A673 (cell line): ENCODE measurements at regions of chr4 and their contacts with region 1.

Region 1: DNA sequence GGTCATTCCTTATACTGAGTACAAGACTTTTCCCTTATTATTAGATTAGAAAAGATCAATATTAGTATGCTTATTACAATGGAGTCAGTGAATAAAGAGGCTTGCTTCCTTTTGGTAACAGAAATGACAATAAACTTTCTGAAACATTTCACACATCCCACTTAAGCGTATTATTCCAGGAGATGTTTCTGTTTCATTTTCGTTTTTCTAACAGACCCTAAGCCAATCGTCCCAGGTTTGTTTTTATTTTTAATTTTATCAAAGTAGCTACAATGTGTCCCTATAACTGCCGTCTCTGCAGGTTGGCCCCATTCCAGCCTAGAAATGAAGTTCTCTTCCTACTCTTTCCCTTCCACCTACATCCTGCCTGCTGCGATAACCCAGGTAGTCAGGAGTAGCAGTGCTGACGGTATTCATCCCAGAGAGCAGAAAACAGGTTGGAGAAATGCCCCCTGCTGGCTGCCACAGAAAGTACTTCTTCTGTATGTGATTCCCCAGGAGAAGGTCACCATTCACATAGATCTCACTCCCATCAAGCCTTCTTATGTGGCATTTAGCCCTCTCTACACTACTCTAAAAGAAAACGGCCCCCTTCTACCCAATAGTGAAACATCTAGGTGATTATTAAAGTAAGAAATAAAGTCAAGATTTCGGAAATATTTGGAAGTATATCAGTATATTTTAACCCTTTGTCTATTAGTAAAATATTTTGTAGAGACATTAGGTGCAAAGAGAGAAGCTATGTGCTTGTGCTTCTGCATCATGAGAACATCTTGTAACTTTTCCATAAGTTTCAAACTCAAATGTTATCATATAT is 40.4 kb downstream of the ENPEP start:
- DNase-seq: peak; percentile 86
- H3K4me3 ChIP-seq: peak overlapping the region; percentile 55
- H3K27ac ChIP-seq: peak overlapping the region; percentile 8
- H3K4me1 ChIP-seq: peaks cover 16% of the 10 kb centered on the region
- H3K27me3 ChIP-seq: no peaks in the 10 kb centered on the region
- CTCF ChIP-seq: peak; percentile 85

Region 2: DNA sequence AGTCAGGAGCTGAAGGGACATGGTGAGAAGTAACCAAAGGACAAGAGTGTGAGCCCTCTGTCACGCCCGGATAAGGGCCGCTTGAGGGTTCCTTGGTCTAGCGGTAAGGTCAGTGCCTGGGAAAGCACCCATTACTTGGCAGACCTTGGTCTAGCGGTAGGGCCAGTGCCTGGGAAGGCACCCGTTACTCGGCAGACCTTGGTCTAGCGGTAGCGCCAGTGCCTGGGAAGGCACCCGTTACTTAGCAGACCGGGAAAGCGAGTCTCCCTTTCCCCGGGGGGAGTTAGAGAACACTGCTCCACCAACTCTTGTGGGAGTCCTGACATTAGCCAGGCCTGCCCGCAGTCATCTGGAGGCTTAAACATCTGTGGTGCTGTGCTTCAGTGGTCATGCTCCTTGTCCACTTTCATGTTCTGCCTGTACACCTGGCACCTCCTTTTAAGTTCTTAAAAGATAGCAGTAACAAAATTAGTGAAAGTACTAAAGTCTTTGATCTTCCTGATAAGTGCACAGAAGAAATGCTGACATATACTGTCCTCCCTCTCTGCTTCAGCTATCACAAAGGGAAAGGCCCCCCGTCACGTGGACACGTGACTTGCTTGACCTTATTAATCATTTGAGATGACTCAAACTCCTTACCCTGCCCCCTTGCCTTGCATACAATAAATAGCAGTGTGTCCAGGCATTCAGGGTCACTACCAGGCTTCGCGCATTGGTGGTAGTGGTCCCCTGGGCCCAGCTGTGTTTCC is 1092.0 kb before region 1 on chr4:
- CTCF ChIA-PET with region 1: no interaction called
- POLR2A ChIA-PET with region 1: no interaction called
- intact Hi-C with region 1: loop called (anchors 5 kb)
- DNase-seq: no peak
- H3K4me3 ChIP-seq: no peak overlapping the region
- H3K27ac ChIP-seq: no peak overlapping the region
- H3K4me1 ChIP-seq: peaks cover 8% of the 10 kb centered on the region
- H3K27me3 ChIP-seq: no peaks in the 10 kb centered on the region
- CTCF ChIP-seq: no peak

Region 3: DNA sequence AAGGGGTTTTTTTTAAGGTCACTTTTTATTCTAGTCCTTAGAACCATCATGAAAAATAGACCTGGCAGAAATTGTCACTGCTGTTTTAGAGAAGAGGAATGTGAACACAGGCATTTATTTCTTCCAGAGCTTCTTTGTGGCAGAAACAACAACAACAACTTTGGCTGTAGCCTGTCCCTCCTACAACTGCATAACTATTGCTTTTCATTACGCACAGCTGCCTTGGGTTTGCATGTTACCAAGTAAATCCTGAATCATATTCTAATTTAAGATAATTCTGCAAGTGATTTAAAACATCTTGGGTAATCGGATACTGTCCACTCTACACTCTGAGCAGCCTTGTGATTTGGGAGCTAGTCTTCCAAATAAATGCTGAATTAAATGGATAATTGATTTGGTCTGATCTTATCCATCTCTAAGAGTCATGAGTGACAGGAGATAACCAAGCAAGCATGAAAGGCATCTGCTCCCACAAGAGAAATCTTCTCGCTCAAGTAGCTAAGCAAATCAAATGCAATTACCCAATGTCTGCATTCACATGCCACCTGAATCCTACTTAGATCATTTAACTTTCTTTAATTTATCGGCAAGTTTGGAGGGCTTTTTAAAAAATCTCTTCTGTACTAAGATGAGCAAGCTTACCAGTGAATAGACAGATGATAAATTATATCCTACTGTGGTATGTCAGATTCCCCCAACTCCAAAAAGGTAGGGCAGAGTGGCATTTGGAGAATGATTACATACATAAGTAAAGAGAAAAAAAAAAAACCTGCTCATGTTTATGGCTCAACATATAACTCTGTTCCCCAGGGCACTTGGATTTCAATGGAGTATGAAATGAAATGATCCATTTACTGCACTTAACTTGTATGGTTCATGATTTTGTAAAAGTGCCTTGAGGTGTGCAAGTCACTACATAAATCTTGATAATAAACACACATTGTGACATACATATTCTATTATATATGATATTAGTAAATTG is 530.0 kb before region 1 on chr4:
- CTCF ChIA-PET with region 1: no interaction called
- POLR2A ChIA-PET with region 1: no interaction called
- intact Hi-C with region 1: no loop called
- DNase-seq: no peak
- H3K4me3 ChIP-seq: no peak overlapping the region
- H3K27ac ChIP-seq: no peak overlapping the region
- H3K4me1 ChIP-seq: peaks cover 22% of the 10 kb centered on the region
- H3K27me3 ChIP-seq: no peaks in the 10 kb centered on the region
- CTCF ChIP-seq: no peak

Region 4: GRCh38 chr4:109998867-109999584 is 517.3 kb before region 1 on chr4:
- CTCF ChIA-PET with region 1: interaction called, 5 read pairs
- POLR2A ChIA-PET with region 1: no interaction called
- intact Hi-C with region 1: loop called (anchors 1 kb)
- DNase-seq: peak; percentile 74
- H3K4me3 ChIP-seq: no peak overlapping the region
- H3K27ac ChIP-seq: no peak overlapping the region
- H3K4me1 ChIP-seq: no peaks in the 10 kb centered on the region
- H3K27me3 ChIP-seq: no peaks in the 10 kb centered on the region
- CTCF ChIP-seq: peak; percentile 68

Region 5: DNA sequence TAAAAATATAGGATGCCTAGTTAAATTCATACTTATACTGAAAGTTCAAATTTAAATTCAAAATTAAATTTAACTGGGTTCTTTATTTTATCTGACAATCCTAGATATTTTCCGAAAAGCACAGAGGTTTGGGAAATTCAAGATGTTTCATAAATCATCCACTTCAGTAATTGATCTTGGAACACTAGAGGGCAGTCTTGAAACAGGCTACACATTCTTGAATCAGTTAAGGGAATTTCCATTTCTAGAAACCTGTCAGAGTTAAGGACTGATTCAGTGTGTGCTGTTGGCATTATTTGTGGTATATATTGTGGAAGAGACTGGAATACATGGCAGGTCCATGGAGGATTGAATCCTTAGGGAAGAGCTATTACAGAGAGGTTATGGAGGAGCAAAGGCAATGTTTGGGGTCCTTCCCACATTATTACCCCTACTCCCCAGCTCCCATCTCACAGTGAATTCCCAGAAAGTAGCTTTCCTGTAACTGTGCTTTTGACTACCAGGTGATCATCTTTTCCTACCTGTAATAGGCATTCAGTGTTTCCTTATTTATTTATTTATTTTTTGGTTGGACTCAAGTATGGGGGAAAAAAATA is 510.8 kb before region 1 on chr4:
- CTCF ChIA-PET with region 1: no interaction called
- POLR2A ChIA-PET with region 1: no interaction called
- intact Hi-C with region 1: loop called (anchors 2 kb)
- DNase-seq: peak; percentile 84
- H3K4me3 ChIP-seq: no peak overlapping the region
- H3K27ac ChIP-seq: no peak overlapping the region
- H3K4me1 ChIP-seq: peaks cover 3% of the 10 kb centered on the region
- H3K27me3 ChIP-seq: no peaks in the 10 kb centered on the region
- CTCF ChIP-seq: peak; percentile 85

Region 6: DNA sequence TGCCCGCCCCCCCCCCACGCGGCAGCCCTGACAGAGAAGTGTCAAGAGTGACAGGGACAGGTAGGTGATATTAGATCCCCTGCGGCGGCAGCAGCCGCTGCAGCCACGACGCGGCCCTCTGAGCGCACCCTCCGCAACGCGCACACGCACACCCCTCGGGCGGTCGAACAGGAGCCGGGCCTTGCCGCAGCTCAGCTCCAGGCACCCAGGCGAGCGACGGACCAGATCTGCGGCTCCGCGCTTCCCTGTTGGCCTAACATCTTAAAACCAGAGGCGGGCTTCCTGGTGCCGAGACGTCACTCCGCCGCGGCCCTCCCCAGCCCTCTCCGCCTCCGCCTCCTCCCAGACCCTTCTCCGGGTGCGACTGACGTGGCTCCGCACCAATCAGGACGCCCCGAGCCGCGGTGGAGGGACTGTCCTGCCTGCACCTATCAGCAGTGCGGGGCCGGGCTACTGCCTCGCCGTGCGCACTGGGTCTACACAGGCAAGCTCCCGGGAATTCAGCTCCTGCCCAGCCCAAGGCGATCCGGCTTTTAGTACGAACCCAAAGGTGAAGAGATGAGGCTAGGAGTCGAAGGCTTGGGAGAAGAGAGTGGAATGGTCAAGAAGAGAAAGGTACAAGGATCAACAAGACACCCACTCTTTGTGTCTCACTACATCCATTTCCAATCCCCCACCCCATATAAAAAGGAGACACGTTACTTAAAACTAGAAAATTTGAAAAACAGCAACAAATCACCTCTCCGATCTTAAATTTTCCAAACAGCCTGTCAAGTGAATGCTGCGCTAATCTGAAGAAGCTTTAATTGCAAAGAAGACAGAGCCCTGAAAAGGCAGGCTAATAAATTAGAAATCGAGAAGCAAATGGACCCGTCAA is 106.8 kb after region 1 on chr4 and contains the start of gene PITX2:
- CTCF ChIA-PET with region 1: no interaction called
- POLR2A ChIA-PET with region 1: no interaction called
- intact Hi-C with region 1: no loop called
- DNase-seq: no peak
- H3K4me3 ChIP-seq: no peak within 1 kb of the TSS
- H3K27ac ChIP-seq: no peak within 1 kb of the TSS
- H3K4me1 ChIP-seq: peaks cover 13% of the 10 kb centered on the region
- H3K27me3 ChIP-seq: no peaks in the 10 kb centered on the region
- CTCF ChIP-seq: no peak
- total RNA-seq, gene PITX2: 0.90 and 2.0 TPM in 2 replicates

Region 7: DNA sequence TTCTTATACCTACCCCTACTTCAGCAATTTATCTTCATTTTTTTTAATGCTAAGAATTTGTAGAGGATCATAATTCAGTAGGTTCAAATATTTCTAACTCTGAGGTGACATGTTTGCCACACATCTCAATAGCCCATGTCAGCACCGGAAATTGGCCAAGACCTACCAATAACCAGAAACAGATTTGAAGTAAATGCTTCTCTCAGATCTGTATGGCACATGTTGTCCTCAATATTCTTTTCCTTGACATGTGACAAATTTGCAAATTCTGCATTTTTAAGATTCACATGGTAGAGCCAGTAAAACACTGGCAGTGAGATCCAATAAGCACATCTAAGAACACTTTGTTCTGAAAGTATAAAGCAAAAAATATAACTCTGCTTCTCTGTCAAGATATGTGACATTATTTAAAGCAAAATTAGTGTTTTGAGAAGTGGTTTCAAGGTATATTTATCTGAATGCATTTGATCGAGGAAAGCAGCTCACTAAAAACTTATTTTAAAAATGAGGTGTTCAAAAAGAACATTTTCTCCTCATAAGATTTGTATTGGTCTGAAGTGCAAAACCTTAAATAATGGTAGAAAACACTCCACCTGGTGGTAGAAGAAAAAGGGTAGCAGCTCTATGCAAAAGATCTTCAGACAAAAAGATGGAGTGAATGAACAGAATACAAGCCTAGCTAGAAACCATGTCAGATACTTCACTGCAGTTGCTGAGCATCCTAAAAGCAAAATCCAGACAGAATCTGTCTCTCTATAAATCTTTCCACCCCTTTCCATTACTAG is 1115.1 kb after region 1 on chr4:
- CTCF ChIA-PET with region 1: no interaction called
- POLR2A ChIA-PET with region 1: no interaction called
- intact Hi-C with region 1: loop called (anchors 5 kb)
- DNase-seq: peak; percentile 61
- H3K4me3 ChIP-seq: no peak overlapping the region
- H3K27ac ChIP-seq: no peak overlapping the region
- H3K4me1 ChIP-seq: peaks cover 32% of the 10 kb centered on the region
- H3K27me3 ChIP-seq: no peaks in the 10 kb centered on the region
- CTCF ChIP-seq: peak; percentile 64